ENCODE measurements at regions of chr7 and their contacts with region 1.

Region 1: DNA sequence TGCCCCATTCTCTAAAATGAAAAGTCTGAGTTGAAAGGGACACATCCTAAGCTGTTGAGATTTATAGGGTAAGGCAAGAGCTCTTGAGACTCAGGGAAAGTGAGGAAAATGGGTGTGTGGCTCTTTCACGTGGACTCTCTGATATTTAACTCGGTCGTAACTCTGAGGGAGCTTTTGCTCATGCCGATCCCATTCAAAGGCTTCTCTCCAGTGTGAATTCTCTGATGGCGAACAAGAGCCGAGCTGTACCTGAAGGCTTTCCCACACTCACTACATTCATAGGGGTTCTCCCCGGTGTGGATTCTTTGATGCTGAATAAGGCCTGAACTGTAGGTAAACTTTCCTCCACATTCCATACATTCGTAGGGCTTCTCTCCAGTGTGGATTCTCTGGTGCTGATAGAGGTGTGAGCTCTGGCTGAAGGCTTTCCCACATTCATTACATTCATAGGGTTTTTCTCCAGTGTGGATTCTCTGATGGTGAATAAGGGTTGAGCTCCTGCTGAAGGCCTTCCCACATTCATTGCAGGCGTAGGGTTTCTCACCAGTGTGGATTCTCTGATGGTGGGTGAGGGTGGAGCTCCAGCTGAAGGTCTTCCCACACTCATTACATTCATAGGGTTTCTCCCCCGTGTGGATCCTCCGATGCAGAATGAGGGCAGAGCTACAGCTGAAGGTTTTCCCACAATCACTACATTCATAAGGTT is 10.4 kb downstream of the ZNF3 start:
- DNase-seq: peak in 1 of 3 donors; percentile 21
- H3K4me3 ChIP-seq: peak overlapping the region in 1 of 7 experiments; percentile 5
- H3K27ac ChIP-seq: no peak overlapping the region
- H3K4me1 ChIP-seq: no peaks in the 10 kb centered on the region
- H3K27me3 ChIP-seq: no peaks in the 10 kb centered on the region

Region 2: DNA sequence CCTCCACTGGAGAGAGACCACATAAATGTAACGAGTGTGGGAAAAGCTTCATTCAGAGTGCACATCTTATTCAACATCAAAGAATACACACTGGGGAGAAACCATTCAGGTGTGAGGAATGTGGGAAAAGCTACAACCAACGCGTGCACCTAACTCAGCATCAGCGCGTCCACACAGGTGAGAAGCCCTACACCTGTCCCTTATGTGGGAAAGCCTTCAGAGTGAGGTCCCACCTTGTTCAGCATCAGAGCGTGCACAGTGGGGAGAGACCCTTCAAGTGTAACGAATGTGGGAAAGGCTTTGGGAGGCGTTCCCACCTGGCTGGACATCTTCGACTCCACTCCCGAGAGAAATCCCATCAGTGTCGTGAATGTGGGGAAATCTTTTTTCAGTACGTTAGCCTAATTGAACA is 539.8 kb before region 1 on chr7:
- CTCF ChIA-PET with region 1: no interaction called
- POLR2A ChIA-PET with region 1: no interaction called
- DNase-seq: peak in 2 of 3 donors; percentile 4 to 15
- H3K4me3 ChIP-seq: no peak overlapping the region
- H3K27ac ChIP-seq: no peak overlapping the region
- H3K4me1 ChIP-seq: no peaks in the 10 kb centered on the region
- H3K27me3 ChIP-seq: no peaks in the 10 kb centered on the region

Region 3: GRCh38 chr7:100059251-100059739 is 11.9 kb before region 1 on chr7:
- CTCF ChIA-PET with region 1: interaction called, 10 read pairs
- POLR2A ChIA-PET with region 1: interaction called, 4 read pairs
- DNase-seq: peak in 1 of 3 donors; percentile 36
- H3K4me3 ChIP-seq: no peak overlapping the region
- H3K27ac ChIP-seq: no peak overlapping the region
- H3K4me1 ChIP-seq: no peaks in the 10 kb centered on the region
- H3K27me3 ChIP-seq: no peaks in the 10 kb centered on the region

Region 4: GRCh38 chr7:100081535-100082102 is 10.4 kb after region 1 on chr7 and contains the start of gene ZNF3:
- CTCF ChIA-PET with region 1: interaction called, 15 read pairs
- POLR2A ChIA-PET with region 1: interaction called, 4 read pairs
- DNase-seq: peak; percentile 99 to 100 (median 100)
- H3K4me3 ChIP-seq: peak within 1 kb of the TSS; percentile 86 to 99 (median 94)
- H3K27ac ChIP-seq: peak within 1 kb of the TSS; percentile 87 to 90
- H3K4me1 ChIP-seq: peaks cover 11 to 30% (median 26%) of the 10 kb centered on the region in 4 experiments
- H3K27me3 ChIP-seq: no peaks in the 10 kb centered on the region